ENCODE measurements at regions of chr12 and their contacts with region 1.

Region 1: GRCh38 chr12:81617915-81618314 is 141.2 kb downstream of the PPFIA2 start:
- DNase-seq: no peak
- ATAC-seq: peak; percentile 67

Region 2: GRCh38 chr12:81588235-81589008 is 29.5 kb before region 1 on chr12:
- intact Hi-C with region 1: loop called (anchors 2 kb)
- DNase-seq: no peak
- ATAC-seq: no peak

Measured in left ventricle myocardium superior (tissue), 1 donor.